ENCODE measurements at regions of chr16 and their contacts with region 1.

Region 1: DNA sequence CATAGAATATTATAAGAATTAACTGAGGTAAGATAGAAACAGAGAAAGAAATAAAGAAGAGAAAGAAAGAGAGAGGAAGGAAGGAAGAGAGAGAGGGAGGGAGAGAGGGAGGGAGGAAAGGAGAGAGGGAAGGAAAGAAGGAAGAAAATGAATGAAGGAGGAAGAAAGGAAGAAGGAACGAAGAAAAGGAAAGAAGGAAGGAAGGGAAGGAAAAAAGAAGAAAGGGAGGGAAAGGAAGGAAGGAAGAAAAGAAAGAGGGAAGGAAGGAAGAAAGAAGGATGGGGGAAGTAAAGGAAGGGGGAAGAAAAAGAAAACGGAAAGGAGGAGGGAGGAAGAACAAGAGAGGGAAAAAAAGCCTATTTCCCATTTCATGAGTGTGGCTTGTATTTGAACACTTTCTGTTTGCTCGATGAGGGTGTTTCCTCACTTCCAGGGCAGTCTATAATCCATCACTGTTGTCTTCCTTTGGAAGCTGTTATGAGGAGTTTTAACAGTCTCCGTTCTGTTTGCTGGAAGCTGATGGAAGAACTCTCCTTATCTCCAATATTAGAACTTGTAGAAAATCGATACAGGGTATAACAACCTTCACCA is 402.4 kb downstream of the TMEM114 start:
- DNase-seq: no peak
- H3K4me3 ChIP-seq: no peak overlapping the region
- H3K27ac ChIP-seq: no peak overlapping the region
- H3K4me1 ChIP-seq: no peaks in the 10 kb centered on the region
- H3K27me3 ChIP-seq: no peaks in the 10 kb centered on the region
- CTCF ChIP-seq: no peak
- EP300 ChIP-seq: no peak
- POLR2A ChIP-seq: no peak

Region 2: DNA sequence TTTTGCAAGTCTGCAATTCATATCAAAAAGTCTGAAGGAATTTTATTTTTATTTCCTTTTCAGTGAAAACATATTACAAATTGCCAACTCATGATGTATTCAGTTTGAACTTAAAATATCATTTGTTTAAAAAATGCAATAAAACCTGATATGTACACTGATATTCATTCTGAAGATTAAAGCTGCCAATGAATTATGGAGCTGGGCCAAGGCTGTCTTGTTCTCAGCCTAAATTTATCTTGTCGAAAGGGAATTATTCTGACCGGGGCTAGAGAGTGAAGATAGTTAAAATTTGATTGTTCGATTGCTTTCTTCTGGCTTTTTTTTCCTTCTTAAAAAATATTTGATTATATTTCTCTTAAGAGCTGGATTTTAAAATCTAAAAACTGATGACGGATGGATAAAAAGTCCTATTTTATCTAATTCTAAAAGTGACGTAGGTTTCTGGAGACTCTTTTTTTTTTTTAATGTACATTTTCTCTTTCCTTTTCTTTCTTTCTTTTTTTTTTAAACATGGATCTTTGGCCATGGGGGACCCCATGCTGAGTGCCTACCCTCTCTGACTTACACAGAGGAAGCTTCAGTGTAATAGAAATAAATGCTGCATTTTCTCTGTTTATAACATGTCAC is 909.1 kb before region 1 on chr16:
- intact Hi-C with region 1: no loop called
- DNase-seq: no peak
- H3K4me3 ChIP-seq: no peak overlapping the region
- H3K27ac ChIP-seq: no peak overlapping the region
- H3K4me1 ChIP-seq: no peaks in the 10 kb centered on the region
- H3K27me3 ChIP-seq: no peaks in the 10 kb centered on the region
- CTCF ChIP-seq: no peak
- EP300 ChIP-seq: no peak
- POLR2A ChIP-seq: no peak

Region 3: GRCh38 chr16:8005096-8005860 is 182.6 kb before region 1 on chr16:
- intact Hi-C with region 1: no loop called
- DNase-seq: no peak
- H3K4me3 ChIP-seq: no peak overlapping the region
- H3K27ac ChIP-seq: no peak overlapping the region
- H3K4me1 ChIP-seq: no peaks in the 10 kb centered on the region
- H3K27me3 ChIP-seq: no peaks in the 10 kb centered on the region
- CTCF ChIP-seq: no peak
- EP300 ChIP-seq: no peak
- POLR2A ChIP-seq: no peak

Region 4: DNA sequence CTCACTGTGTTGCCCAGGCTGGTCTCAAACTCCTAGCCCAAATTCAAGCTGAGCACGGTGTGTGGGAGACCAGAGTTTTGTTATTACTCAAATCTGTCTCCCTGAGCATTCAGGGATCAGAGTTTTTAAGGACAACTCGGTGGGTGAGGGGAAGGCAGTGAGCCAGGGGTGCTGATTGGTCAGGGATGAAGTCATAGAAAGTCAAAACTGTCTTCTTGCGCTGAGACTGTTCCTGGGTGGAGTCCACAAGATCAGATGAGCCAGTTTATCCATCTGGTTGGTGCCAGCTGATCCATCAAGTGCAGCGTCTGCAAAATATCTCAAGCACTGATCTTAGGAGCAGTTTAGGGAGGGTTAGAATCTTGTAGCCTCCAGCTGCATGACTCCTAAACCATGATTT is 56.1 kb after region 1 on chr16:
- intact Hi-C with region 1: loop called (anchors 2 kb)
- DNase-seq: no peak
- H3K4me3 ChIP-seq: no peak overlapping the region
- H3K27ac ChIP-seq: no peak overlapping the region
- H3K4me1 ChIP-seq: no peaks in the 10 kb centered on the region
- H3K27me3 ChIP-seq: no peaks in the 10 kb centered on the region
- CTCF ChIP-seq: no peak
- EP300 ChIP-seq: no peak
- POLR2A ChIP-seq: no peak

Measured in stomach (tissue), 19 donors.